HEK293 (cell line): ENCODE measurements at regions of chr12 and their contacts with region 1.

Region 1: GRCh38 chr12:77324763-77325468 is 259.5 kb upstream of the E2F7 start:
- H3K4me3 ChIP-seq: peak overlapping the region; percentile 56
- H3K27ac ChIP-seq: no peak overlapping the region; the same call in 1 of the 2 replicates
- H3K4me1 ChIP-seq: no peaks in the 10 kb centered on the region
- CTCF ChIP-seq: peak; percentile 60

Region 2: DNA sequence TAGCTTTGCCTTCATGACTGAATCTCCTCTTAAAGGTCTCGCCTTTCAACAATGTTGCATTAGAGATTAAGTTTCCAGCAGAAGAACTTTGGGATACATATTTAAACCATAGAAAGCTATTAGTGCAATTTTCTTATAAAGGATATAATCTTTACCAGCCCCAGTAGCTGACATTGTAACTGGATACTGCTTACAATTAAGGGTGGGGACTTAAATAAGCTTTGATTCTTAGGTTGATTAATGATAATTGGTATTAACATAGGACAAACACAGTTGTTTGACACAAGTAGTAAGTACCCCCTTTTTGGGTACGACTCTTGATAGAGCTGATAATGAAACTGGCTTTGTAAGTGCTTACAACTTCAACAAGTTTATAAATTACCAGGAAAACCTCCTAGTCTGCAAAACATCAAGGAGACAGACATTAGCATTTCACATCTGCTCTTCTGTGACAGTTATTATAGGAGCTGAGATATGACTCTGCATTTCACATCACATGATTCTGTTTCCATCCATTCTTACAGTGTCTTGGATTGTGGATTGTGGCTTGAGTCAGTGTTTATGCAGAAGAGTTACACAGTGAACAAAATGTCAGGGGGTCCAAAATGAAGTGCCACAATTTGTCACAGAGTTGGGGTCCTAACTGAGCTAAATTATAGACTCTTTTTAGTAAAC is 10.4 kb before region 1 on chr12:
- CTCF ChIA-PET with region 1: interaction called, 13 read pairs
- POLR2A ChIA-PET with region 1: no interaction called
- H3K4me3 ChIP-seq: no peak overlapping the region
- H3K27ac ChIP-seq: no peak overlapping the region
- H3K4me1 ChIP-seq: no peaks in the 10 kb centered on the region
- CTCF ChIP-seq: no peak